WTC11 (cell line): ENCODE measurements at regions of chr5 and their contacts with region 1.

Region 1: GRCh38 chr5:80093796-80094195 is 58.6 kb downstream of the THBS4 start:
- DNase-seq: no peak
- ATAC-seq: peak; percentile 48
- H3K4me3 Mint-ChIP-seq: no peak overlapping the region
- H3K27ac Mint-ChIP-seq: peak overlapping the region; percentile 38; the same call in 1 of the 2 replicates
- H3K4me1 Mint-ChIP-seq: peaks cover 38% of the 10 kb centered on the region
- H3K27me3 Mint-ChIP-seq: no peaks in the 10 kb centered on the region; the same call in 1 of the 2 replicates
- CTCF ChIP-seq: no peak

Region 2: DNA sequence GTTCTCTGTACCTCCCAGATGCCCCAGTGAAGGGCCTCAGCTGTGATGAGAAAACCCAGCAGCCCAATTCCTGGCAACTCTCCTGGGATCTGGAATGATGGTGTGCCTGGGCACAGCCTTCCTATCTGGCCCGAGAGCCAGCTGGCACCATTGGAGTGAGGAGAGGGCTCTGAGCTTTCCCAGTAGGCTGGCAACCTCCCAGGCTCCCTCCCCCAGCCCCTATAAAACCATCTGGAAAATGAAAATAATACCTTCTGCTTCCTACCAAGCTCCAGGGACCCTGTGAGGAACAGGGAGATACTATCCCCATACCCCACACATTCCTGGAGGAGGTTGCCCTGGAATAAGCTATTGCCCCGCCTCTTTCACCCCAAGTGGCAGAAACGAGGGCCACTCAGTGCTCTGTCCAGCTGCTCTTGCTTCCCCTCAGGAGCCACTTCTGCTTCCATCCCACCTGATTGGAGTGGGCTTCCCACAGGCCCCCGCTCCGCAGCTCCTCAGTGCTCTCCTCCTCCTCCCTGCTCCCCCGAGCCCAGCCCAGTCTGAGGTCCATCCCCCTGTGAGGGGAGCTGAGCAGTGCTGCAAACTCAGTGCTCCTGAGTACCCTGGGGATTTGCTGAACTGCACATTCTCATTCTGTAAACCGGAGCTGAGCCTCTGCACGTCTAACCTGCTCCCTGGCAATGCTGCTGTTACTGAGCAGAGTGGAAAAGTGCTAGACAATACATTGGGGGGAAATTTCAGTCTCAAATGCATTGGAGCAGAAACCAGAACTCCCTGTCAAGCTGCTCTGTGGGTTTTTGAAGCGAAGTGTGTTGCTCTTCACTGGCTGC is 16.1 kb after region 1 on chr5:
- CTCF ChIA-PET with region 1: interaction called, 12 read pairs
- POLR2A ChIA-PET with region 1: no interaction called
- DNase-seq: peak; percentile 23
- ATAC-seq: peak; percentile 78
- H3K4me3 Mint-ChIP-seq: no peak overlapping the region; the same call in 1 of the 2 replicates
- H3K27ac Mint-ChIP-seq: peak overlapping the region; percentile 75
- H3K4me1 Mint-ChIP-seq: peaks cover 35% of the 10 kb centered on the region
- H3K27me3 Mint-ChIP-seq: peaks cover 3% of the 10 kb centered on the region; the same call in 1 of the 2 replicates
- CTCF ChIP-seq: no peak

Region 3: GRCh38 chr5:80141147-80141671 is 47.4 kb after region 1 on chr5:
- CTCF ChIA-PET with region 1: interaction called, 11 read pairs
- POLR2A ChIA-PET with region 1: no interaction called
- DNase-seq: peak; percentile 72
- ATAC-seq: peak; percentile 80
- H3K4me3 Mint-ChIP-seq: peak overlapping the region; percentile 40
- H3K27ac Mint-ChIP-seq: peak overlapping the region; percentile 100
- H3K4me1 Mint-ChIP-seq: peaks cover 82% of the 10 kb centered on the region
- H3K27me3 Mint-ChIP-seq: no peaks in the 10 kb centered on the region
- CTCF ChIP-seq: no peak

Region 4: DNA sequence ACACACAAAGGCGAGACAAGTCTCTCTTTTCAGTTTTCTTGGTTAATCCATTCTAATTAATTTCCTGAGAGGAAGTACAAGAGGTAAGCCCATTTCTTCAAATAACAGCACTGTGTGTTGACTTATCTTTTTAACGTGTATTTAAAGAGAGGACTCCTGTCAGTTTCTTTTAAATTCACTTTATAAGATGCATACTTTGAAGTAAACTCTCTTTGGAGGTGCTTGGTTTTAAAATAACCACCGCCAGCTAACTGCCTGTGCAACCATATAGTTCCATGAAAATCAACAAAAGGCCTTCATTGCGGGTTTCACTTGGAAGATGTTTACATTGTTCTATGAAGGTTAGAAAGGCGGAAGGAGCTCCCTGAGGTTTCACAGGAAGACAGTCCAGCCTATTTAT is 175.1 kb after region 1 on chr5:
- CTCF ChIA-PET with region 1: interaction called, 11 read pairs
- POLR2A ChIA-PET with region 1: no interaction called
- DNase-seq: no peak
- ATAC-seq: no peak
- H3K4me3 Mint-ChIP-seq: no peak overlapping the region
- H3K27ac Mint-ChIP-seq: peak overlapping the region; percentile 64
- H3K4me1 Mint-ChIP-seq: peaks cover 34% of the 10 kb centered on the region
- H3K27me3 Mint-ChIP-seq: no peaks in the 10 kb centered on the region
- CTCF ChIP-seq: no peak

Region 5: DNA sequence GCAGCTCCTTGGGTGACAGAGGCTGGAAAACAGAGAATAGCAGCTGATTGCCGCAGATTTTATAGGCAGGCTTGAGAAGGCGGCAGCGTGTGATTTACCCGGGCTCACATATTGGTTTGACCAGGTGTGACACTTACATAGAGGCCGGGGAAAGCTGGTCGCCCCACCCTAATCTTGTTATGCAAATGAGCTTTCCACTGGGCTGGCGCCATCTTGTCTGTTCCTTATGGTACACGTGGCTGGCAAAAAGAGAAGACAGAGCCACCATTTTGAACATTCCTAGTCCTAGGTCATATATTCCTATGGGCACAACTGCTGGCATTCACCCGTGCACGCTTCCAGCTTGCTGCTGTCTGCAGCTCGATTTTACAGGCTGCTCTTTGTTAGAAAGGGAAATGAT is 214.7 kb after region 1 on chr5:
- CTCF ChIA-PET with region 1: interaction called, 86 read pairs
- POLR2A ChIA-PET with region 1: interaction called, 5 read pairs
- DNase-seq: no peak
- ATAC-seq: peak; percentile 24; the same call in 1 of the 2 replicates
- H3K4me3 Mint-ChIP-seq: no peak overlapping the region
- H3K27ac Mint-ChIP-seq: no peak overlapping the region
- H3K4me1 Mint-ChIP-seq: peaks cover 19% of the 10 kb centered on the region
- H3K27me3 Mint-ChIP-seq: no peaks in the 10 kb centered on the region; the same call in 1 of the 2 replicates
- CTCF ChIP-seq: no peak